ENCODE measurements at regions of chr15 and their contacts with region 1.

Region 1: DNA sequence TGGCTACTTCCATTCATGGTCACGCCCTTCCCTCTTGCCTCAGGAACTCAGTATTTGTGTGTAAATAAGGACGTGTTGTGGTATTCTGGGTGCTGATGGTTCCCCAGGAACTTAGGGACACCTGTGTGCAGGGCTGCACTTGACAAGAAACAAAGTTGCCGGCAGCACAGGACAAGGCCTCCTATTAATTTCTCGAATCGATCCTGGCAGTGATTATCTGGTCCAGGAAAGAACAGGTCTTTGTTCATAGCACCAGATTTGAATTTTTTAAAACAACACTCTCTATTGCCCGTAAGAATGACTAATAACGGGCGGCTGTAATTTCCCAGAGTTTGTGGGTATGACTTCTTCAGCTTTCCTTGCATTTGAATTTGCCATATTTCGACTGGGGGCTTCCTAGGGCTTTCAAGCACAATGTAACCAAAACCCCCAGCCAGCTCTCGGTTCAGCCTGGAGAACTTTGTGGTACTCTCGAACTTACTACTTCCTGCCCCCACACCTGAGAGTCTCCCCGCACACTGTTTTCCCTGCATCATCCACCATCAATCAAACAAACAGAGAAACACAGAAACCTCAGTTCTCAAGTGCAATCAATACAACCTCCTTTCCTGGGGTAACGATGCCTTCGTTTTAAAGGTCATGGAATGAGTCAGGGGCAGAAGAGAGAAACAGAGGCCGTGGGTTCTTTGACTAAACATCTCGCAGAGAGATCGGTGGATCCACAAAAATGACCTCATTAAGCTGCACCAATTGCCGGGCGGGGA is 241.7 kb upstream of the ICE2 start:
- DNase-seq: no peak
- H3K4me3 ChIP-seq: no peak overlapping the region
- H3K27ac ChIP-seq: no peak overlapping the region
- H3K4me1 ChIP-seq: no peaks in the 10 kb centered on the region
- H3K27me3 ChIP-seq: no peaks in the 10 kb centered on the region
- CTCF ChIP-seq: no peak
- EP300 ChIP-seq: no peak
- POLR2A ChIP-seq: no peak

Region 2: GRCh38 chr15:60787837-60788691 is 67.4 kb after region 1 on chr15:
- in situ Hi-C with region 1: loop called in 1 of 4 experiments (anchors 10 kb)
- intact Hi-C with region 1: no loop called
- DNase-seq: no peak
- H3K4me3 ChIP-seq: no peak overlapping the region
- H3K27ac ChIP-seq: peak overlapping the region in 1 of 4 donors; percentile 29
- H3K4me1 ChIP-seq: no peaks in the 10 kb centered on the region
- H3K27me3 ChIP-seq: no peaks in the 10 kb centered on the region
- CTCF ChIP-seq: peak; percentile 18 to 40 (median 30)
- EP300 ChIP-seq: no peak
- POLR2A ChIP-seq: no peak

Measured in transverse colon (tissue), 4 donors.